ENCODE measurements at regions of chr16 and their contacts with region 1.

Region 1: DNA sequence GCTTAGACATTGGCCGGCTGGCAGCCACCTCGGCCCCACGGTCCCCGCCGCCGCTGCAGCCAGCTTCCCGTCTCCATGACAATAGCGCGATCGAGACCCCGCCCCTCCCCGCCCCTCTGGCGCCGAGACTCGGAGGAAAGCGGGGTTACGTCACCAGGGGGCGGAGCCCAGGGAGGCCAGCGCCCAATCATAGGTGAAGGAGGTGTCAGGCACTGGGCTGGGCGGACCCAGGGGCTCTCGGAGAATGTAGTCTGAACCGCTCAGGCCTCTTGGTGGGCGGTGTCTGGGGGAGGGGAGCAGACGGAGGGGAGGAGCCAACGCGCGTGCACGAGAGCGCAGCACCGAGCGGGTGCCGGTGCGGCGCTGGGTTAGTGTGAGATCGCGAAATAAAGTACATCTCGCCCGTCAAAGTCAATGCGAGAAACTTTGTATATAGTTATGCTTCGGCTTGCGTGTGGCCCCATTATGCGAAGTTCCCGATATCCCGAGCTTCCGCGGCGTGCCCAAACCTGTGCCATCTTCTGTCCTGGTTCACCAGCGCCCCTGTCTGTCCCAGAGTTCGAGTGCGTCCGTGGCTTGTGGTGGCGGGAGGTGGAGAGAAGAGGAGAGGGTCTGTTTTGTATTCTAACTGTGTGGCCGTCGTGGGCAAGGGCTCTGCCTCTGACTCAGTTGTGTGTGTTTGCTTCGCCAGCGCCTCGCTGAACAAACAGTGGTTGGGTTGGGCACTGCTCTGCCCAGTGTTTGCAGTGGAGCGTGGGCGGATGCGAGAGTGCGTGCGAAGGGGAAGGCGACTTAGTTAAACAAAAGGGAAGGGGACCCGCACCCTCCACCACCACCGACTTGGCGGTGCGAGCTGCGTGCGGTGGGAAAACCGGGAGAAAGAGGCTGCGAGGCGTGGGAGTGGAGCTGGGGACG is 1.3 kb upstream of the IRX5 start:
- DNase-seq: peak; percentile 99
- H3K4me3 ChIP-seq: peak overlapping the region; percentile 91
- H3K27ac ChIP-seq: peak overlapping the region; percentile 80
- H3K4me1 ChIP-seq: peaks cover 30% of the 10 kb centered on the region
- CTCF ChIP-seq: peak; percentile 68

Region 2: DNA sequence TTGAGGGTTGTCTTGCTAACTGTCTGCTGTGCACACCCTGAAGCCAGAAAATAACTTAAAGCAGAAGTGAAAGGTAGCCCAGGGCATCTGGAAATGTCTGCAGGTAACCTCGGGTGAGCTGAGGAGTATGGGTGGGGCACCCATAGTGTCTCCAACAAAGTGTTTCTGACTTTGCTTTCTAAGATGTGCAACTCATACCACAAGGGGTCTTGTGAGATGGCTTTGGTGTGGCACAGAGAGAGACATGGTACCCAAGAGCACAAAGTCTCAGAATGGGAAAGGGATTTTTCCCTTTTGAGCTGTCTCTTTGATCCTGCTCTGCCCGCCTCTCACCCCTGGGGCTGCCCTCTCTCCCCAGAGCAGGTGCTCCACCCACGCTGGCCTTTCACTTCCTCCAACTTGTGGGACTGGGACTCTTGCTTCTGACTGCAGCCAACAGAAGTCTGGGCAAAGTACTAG is 1867.6 kb before region 1 on chr16:
- CTCF ChIA-PET with region 1: no interaction called
- POLR2A ChIA-PET with region 1: no interaction called
- intact Hi-C with region 1: loop called (anchors 10 kb)
- DNase-seq: peak; percentile 87
- H3K4me3 ChIP-seq: peak overlapping the region; percentile 53
- H3K27ac ChIP-seq: peak overlapping the region; percentile 92
- H3K4me1 ChIP-seq: peaks cover 100% of the 10 kb centered on the region
- CTCF ChIP-seq: peak; percentile 44

Region 3: DNA sequence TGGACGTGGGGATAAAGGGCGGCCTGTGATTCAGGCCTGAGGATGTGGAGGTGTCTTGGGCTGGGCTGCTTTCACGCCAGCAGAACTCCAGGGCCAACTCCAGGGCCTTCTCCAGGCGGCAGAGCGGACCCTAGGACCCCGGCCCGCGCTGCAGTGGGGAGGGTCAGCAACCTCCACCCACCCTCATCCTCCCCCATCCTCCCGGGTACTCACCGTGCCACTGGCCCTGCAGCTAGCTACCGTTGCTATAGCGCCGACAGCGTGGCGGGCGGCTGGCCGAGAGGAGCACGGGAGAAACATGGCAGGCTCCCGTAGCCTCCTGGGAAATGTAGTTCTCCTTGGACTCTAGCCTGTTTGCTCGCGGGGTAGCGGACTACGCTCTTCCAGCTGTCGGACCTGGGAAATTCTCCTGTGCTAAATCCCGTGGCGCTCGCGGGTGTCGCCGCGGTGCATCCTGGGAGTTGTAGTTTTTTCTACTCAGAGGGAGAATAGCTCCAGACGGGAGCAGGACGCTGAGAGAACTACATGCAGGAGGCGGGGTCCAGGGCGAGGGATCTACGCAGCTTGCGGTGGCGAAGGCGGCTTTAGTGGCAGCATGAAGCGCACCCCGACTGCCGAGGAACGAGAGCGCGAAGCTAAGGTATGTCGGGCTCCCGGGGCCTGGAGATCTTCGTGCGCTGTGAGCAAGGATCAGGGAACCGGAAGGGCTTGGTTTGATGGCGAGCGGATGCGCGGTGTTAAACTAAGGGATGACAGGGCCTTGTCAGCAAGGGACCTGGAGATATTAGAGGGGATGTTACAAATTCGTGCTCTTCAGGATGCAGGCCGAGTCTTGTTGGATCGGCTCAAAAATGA is 1225.5 kb before region 1 on chr16 and contains the starts of genes FTO and RPGRIP1L:
- CTCF ChIA-PET with region 1: no interaction called
- POLR2A ChIA-PET with region 1: no interaction called
- intact Hi-C with region 1: loop called (anchors 5 kb)
- DNase-seq: peak; percentile 98
- H3K4me3 ChIP-seq: peak within 1 kb of the TSS; percentile 88
- H3K27ac ChIP-seq: no peak within 1 kb of the TSS
- H3K4me1 ChIP-seq: peaks cover 10% of the 10 kb centered on the region
- CTCF ChIP-seq: no peak
- total RNA-seq, gene FTO: 47.9 and 57.1 TPM in 2 replicates
- total RNA-seq, gene RPGRIP1L: 9.4 and 15.4 TPM in 2 replicates

Region 4: DNA sequence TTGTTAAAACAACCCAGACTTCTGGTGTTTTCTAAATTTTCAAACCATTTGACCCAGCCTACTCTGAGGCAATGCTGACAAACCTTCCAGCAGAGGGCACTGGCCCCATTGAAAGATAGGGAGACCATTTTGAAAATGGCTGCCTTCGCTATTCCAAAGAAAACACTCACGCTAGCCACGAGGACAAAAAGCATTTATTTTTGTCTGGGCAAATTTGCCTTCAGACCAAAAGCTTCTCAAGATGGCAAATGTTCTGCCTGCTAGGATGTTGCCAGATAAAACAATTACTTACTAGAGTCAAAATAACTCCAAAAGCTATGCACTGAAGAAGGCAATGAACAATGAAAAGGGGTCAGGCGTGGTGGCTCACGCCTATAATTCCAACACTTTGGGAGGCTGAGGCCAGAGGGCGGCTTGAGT is 295.4 kb before region 1 on chr16:
- CTCF ChIA-PET with region 1: no interaction called
- POLR2A ChIA-PET with region 1: no interaction called
- intact Hi-C with region 1: loop called (anchors 1 kb)
- DNase-seq: peak; percentile 29
- H3K4me3 ChIP-seq: no peak overlapping the region
- H3K27ac ChIP-seq: no peak overlapping the region
- H3K4me1 ChIP-seq: no peaks in the 10 kb centered on the region
- CTCF ChIP-seq: peak; percentile 79

Region 5: GRCh38 chr16:54817446-54817845 is 111.9 kb before region 1 on chr16:
- CTCF ChIA-PET with region 1: no interaction called
- POLR2A ChIA-PET with region 1: no interaction called
- intact Hi-C with region 1: loop called (anchors 5 kb)
- DNase-seq: peak; percentile 38
- H3K4me3 ChIP-seq: no peak overlapping the region
- H3K27ac ChIP-seq: no peak overlapping the region
- H3K4me1 ChIP-seq: no peaks in the 10 kb centered on the region
- CTCF ChIP-seq: peak; percentile 62

Region 6: DNA sequence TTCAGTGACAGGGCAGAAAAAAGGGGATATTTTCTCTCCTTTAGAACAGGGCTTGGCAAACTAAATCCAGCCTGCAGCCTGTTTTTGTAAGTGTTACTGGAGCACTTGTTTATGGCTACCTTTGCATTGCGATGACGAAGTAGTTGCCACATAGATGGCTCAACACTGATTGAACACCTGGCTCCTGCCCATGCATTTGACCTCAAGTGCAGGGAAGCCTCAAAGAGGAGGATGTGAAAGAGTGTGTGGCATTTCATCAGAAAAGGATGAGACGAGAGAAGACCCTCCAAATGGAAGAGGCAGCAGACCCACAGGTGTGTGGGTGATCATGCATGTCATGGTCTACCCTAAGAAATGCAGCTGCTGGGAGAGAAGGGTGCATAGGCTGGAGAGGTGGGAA is 31.4 kb before region 1 on chr16:
- CTCF ChIA-PET with region 1: no interaction called
- POLR2A ChIA-PET with region 1: interaction called, 48 read pairs
- intact Hi-C with region 1: loop called (anchors 1 kb)
- DNase-seq: peak; percentile 96
- H3K4me3 ChIP-seq: peak overlapping the region; percentile 49
- H3K27ac ChIP-seq: peak overlapping the region; percentile 97
- H3K4me1 ChIP-seq: peaks cover 62% of the 10 kb centered on the region
- CTCF ChIP-seq: no peak

Region 7: GRCh38 chr16:54996186-54996585 is 66.8 kb after region 1 on chr16:
- CTCF ChIA-PET with region 1: no interaction called
- POLR2A ChIA-PET with region 1: no interaction called
- intact Hi-C with region 1: no loop called
- DNase-seq: no peak
- H3K4me3 ChIP-seq: no peak overlapping the region
- H3K27ac ChIP-seq: no peak overlapping the region
- H3K4me1 ChIP-seq: no peaks in the 10 kb centered on the region
- CTCF ChIP-seq: no peak

Measured in OCI-LY7 (cell line).